ENCODE measurements at regions of chr19 and their contacts with region 1.

Region 1: DNA sequence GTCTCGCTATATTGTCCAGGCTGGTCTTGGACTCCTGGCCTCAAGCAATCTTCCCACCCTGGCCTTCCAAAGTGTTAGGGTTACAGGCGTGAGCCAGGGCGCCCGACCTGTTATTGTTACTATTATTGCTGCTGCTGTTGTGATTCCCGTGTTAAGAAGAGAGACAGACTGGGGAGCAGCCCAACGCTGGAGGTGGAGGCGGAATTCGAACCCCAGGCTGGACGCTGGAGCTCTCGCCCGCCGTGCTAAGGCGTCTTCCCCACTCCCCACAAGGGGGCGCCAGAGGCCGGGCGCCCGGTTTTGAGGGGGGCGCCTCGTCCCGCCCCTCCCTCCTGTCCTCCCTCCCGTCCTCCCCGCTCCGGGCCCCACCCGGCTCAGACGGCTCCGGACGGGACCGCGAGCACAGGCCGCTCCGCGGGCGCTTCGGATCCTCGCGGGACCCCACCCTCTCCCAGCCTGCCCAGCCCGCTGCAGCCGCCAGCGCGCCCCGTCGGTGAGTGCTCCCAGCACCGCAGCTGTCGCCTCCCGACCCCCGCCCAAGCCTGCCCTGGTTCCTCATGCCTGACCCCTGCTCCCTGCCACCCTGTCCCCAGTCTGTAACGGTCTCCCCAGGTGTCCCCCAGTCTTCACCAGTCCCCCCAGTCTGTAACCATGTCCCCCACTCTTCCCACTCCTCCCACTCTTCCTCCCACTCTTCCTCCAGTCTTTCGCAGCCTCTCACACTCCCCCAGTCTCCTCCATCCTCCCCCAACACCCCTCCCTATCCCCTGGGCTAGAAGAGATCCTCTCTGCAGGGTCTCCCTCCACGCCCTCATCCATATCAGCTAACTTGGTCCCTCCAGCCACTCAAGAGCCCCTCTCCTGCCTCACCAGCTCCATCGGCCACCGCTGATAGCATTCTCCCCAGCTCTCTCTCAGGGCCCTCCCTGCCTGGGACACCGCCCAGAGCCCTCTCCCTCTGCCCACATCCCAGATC is at the start of gene EHD2:
- DNase-seq: no peak
- H3K4me3 Mint-ChIP-seq: peak within 1 kb of the TSS; percentile 31
- H3K27ac Mint-ChIP-seq: no peak within 1 kb of the TSS
- H3K4me1 Mint-ChIP-seq: no peaks in the 10 kb centered on the region
- H3K27me3 Mint-ChIP-seq: peaks cover 23% of the 10 kb centered on the region
- total RNA-seq, gene EHD2: 1.4 TPM in 2 replicates

Region 2: DNA sequence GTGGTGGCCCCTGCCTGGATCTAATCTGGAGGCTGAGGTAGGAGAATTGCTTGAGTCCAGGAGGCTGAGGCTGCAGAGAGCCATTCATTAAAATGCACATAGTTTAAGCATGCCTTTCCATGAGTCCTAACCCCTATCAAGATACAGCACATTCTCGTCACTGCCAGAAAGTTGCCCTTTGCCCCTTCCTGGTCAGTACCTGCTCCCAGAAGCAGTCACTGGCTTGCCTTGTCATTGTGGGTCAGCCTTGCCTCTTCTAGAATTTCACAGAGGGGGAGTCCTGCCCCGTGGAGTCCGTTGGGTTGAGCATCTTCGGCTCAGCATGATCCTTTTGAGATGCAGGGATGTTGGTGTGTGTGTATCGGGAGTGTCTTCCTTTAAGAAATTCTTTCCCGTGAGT is 93.6 kb before region 1 on chr19:
- intact Hi-C with region 1: no loop called
- DNase-seq: no peak
- H3K4me3 Mint-ChIP-seq: no peak overlapping the region
- H3K27ac Mint-ChIP-seq: no peak overlapping the region
- H3K4me1 Mint-ChIP-seq: no peaks in the 10 kb centered on the region
- H3K27me3 Mint-ChIP-seq: no peaks in the 10 kb centered on the region

Region 3: GRCh38 chr19:47697863-47698609 is 15.3 kb before region 1 on chr19:
- intact Hi-C with region 1: no loop called
- DNase-seq: peak; percentile 39
- H3K4me3 Mint-ChIP-seq: no peak overlapping the region
- H3K27ac Mint-ChIP-seq: no peak overlapping the region
- H3K4me1 Mint-ChIP-seq: no peaks in the 10 kb centered on the region
- H3K27me3 Mint-ChIP-seq: no peaks in the 10 kb centered on the region

Region 4: DNA sequence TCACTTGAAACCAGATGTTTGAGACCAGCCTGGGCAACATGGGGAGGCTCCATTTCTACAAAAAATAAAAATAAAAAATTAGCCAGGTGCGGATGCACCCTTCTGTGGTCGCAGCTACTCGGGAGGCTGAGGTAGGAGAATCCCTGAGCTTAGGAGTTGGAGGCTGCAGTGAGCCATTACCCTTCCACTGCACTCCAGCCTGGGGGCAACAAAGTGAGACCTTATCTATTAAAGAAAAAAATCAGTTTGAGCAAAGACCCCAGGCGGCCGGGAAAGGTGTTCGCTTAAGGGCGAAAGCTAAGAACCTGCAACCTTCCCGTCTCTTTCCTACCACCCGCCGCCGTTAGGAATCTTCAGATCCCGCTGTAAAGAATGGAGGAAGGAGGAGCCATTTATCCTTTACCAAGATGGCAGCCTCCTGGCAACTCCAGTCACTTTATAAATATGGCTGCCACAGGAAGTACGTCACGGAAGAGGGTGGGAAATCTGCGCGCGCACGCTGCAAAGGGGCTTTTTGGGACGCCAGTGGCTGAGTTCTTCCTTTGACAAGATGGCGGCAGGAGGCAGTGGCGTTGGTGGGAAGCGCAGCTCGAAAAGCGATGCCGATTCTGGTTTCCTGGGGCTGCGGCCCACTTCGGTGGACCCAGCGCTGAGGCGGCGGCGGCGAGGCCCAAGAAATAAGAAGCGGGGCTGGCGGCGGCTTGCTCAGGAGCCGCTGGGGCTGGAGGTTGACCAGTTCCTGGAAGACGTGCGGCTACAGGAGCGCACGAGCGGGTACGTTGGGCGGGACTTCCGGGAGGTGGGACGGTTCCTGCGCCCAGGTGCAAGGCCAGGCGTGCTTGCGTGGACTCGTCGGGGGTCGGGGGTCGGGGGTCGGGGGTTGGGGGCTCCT is 31.9 kb after region 1 on chr19 and contains the start of gene NOP53:
- intact Hi-C with region 1: loop called (anchors 1 kb)
- DNase-seq: peak; percentile 95
- H3K4me3 Mint-ChIP-seq: peak within 1 kb of the TSS; percentile 99
- H3K27ac Mint-ChIP-seq: peak within 1 kb of the TSS; percentile 98
- H3K4me1 Mint-ChIP-seq: peaks cover 26% of the 10 kb centered on the region
- H3K27me3 Mint-ChIP-seq: no peaks in the 10 kb centered on the region
- total RNA-seq, gene NOP53: 266 and 269 TPM in 2 replicates

Region 5: DNA sequence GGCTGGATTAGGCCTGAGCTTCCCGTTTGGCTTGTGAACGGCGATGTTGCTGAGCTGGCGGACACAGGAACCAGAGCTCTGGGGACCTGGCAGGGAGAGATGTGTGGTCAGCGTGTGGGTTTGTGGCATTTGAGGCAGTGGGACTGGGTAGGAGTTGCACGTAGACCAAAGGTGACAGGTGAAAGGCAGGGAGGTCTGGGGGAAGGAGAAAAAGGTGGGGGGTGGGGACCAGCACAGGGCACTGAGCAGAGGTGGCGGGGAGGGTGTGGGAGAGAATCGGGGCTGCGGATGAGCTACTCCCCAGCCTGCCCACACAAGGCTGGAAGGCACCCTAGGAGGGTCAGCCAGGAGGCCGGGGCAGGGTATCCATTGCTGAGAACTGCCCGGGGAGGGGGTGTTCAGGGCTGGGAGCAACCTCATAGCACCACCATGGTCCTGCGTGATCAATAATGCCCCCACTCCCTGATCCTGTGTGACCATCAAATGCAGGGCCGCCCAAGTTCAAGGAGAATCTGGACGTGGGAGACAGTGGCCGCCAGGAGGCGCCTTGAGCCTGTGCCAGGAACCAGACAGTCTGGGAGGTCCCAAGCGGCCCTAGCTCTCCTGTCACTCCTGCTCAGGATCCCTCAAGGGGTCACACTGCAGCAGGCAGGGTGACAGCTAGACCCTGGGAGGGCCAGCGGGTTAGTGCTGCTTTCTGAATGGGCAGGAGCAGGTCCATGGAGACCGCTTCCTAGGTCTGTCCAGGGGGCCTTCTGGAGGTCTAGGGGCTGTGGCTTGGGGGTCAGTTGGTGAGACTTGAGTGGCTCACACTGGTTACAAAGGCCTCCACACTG is 52.4 kb after region 1 on chr19:
- intact Hi-C with region 1: no loop called
- DNase-seq: no peak
- H3K4me3 Mint-ChIP-seq: no peak overlapping the region
- H3K27ac Mint-ChIP-seq: no peak overlapping the region
- H3K4me1 Mint-ChIP-seq: peaks cover 1% of the 10 kb centered on the region
- H3K27me3 Mint-ChIP-seq: no peaks in the 10 kb centered on the region

Region 6: GRCh38 chr19:47779524-47780214 is 66.3 kb after region 1 on chr19:
- intact Hi-C with region 1: loop called (anchors 10 kb)
- DNase-seq: no peak
- H3K4me3 Mint-ChIP-seq: peak overlapping the region; percentile 95
- H3K27ac Mint-ChIP-seq: peak overlapping the region; percentile 70
- H3K4me1 Mint-ChIP-seq: peaks cover 9% of the 10 kb centered on the region
- H3K27me3 Mint-ChIP-seq: no peaks in the 10 kb centered on the region

Region 7: DNA sequence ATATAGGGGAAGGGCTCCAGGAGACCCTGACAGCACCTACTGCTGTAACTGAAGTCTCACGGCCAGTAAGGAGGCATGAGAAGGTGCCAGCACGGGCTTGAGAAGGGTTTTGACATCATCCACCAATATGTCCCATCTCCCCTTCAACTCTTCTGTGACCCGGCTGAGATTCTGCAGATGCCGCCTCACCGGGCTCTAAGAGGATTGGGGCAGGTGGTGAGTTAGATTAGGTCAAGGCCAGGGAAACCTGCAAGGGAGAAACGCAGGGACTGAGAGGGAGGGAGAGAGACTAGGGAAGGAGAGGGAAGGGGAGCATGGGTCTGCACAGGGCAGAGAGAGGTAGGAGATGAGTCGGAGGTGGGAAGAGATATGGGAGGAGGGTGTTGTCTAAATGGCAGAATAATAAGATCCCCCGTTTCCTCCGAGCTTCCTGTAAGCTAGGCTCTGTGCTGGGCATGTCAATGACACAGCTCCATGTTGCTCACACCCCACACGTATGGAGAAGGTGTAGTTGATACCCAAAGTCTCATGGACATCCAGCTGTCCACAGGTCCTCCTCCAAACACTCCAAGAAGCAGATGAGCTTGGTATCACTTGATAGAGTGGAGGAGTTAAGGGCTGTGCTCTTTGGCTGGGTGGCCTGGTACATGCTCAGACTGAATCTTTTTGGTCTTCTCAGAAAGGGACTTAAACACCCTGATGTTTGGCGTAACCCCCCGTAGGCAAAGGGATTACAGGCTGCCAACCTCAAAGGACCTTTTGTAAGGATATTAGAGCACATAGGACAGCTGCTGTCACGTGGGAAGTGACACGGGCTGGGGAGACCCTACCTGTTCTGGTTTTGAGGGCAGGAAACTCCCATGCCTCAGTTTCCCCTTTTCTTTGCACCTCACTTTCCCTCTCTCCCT is 84.9 kb after region 1 on chr19:
- intact Hi-C with region 1: no loop called
- DNase-seq: no peak
- H3K4me3 Mint-ChIP-seq: no peak overlapping the region
- H3K27ac Mint-ChIP-seq: no peak overlapping the region
- H3K4me1 Mint-ChIP-seq: no peaks in the 10 kb centered on the region
- H3K27me3 Mint-ChIP-seq: peaks cover 1% of the 10 kb centered on the region

Measured in activated T-helper 2 cell treated with anti-CD3 and anti-CD28 coated beads, Interferon-gamma antibody, Interleukin-2, Interleukin-4, amounts not matched to agents 10 μg/mL and 5 μg/mL and 100 μg/mL, durations not matched to agents 14 hours and 24 hours and 36 hours (primary cell).